CD8-positive, alpha-beta memory T cell (primary cell): ENCODE measurements at regions of chr20 and their contacts with region 1.

Region 1: DNA sequence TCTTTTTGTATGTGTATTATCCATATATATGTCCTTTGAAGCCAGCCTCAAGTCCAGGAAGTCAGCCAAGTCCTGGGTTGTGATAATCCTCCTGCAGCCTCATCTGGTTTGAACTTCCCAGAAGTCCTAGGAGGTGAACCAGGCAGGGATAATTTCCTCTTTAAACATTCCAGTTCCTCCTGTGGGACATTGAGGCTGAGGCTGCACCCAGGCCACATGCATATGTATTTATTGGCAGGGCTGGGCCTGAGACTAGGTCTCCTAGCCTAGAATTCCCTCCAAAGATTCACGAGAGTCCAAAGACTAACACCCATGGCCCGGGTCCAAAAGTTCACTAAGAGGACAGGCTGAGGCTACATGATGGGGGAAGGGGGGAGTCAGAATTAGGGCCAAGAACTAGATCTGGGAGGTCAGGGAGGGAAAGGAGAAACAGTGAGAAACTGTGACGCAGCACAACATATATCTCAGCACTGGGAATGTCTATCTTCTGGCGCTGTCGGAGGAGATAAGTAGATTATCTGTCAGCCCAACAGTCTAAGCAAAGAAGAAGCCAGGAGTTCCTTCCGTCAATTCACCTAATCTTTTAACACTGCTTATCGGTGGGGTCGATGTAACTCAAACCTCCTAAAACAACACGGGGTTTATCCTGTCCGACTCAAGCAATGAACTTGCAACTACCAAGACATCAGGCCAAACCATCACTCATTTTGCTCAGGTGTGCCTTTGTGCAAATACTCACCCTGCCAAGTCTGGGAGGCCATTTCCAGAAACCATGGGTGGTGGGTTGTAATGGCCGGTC is 43.3 kb downstream of the SNX5 start:
- DNase-seq: no peak
- H3K4me3 ChIP-seq: no peak overlapping the region
- H3K4me3 Mint-ChIP-seq: no peak overlapping the region
- H3K27ac ChIP-seq: no peak overlapping the region
- H3K27ac Mint-ChIP-seq: no peak overlapping the region
- H3K4me1 ChIP-seq: no peaks in the 10 kb centered on the region
- H3K4me1 Mint-ChIP-seq: no peaks in the 10 kb centered on the region
- H3K27me3 ChIP-seq: no peaks in the 10 kb centered on the region
- H3K27me3 Mint-ChIP-seq: peaks cover 6 to 24% of the 10 kb centered on the region in 2 donors

Region 2: GRCh38 chr20:17898548-17898994 is 26.8 kb before region 1 on chr20:
- CTCF ChIA-PET with region 1: no interaction called
- POLR2A ChIA-PET with region 1: no interaction called
- DNase-seq: peak; percentile 43 to 73 (median 45)
- H3K4me3 ChIP-seq: no peak overlapping the region
- H3K4me3 Mint-ChIP-seq: no peak overlapping the region
- H3K27ac ChIP-seq: no peak overlapping the region
- H3K27ac Mint-ChIP-seq: no peak overlapping the region
- H3K4me1 ChIP-seq: no peaks in the 10 kb centered on the region
- H3K4me1 Mint-ChIP-seq: peaks cover 0 to 8% (median 3%) of the 10 kb centered on the region in 3 donors
- H3K27me3 ChIP-seq: peaks cover 4% of the 10 kb centered on the region
- H3K27me3 Mint-ChIP-seq: peaks cover 26 to 37% of the 10 kb centered on the region in 2 donors

Region 3: DNA sequence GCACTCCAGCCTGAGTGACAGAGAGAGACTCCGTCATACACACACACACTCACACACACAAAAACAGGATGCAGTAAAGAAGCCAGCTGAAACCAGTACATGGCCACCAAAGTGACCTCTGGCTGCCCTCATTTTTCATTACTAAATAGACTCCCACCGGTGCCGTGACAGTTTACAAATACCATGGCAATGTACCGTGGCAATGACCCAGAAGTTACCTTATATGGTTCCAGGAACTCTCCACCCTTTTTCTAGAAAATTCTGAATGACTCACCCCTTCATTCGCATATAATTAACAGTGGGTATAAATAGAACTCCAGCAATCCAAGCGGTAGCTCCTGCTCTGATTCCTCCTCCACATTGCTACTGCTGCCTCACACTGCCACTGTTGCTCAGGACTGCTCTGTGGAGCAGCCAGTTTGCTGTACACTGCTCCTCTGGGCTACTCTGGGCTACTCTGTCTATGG is 14.5 kb before region 1 on chr20:
- CTCF ChIA-PET with region 1: no interaction called
- POLR2A ChIA-PET with region 1: no interaction called
- DNase-seq: no peak
- H3K4me3 ChIP-seq: no peak overlapping the region
- H3K4me3 Mint-ChIP-seq: no peak overlapping the region
- H3K27ac ChIP-seq: no peak overlapping the region
- H3K27ac Mint-ChIP-seq: peak overlapping the region in 1 of 8 donors; percentile 68
- H3K4me1 ChIP-seq: no peaks in the 10 kb centered on the region
- H3K4me1 Mint-ChIP-seq: no peaks in the 10 kb centered on the region
- H3K27me3 ChIP-seq: no peaks in the 10 kb centered on the region
- H3K27me3 Mint-ChIP-seq: peaks cover 15 to 39% of the 10 kb centered on the region in 2 donors

Region 4: GRCh38 chr20:17956099-17956685 is 30.9 kb after region 1 on chr20:
- CTCF ChIA-PET with region 1: no interaction called
- POLR2A ChIA-PET with region 1: interaction called, 13 read pairs
- DNase-seq: no peak
- H3K4me3 ChIP-seq: no peak overlapping the region
- H3K4me3 Mint-ChIP-seq: no peak overlapping the region
- H3K27ac ChIP-seq: no peak overlapping the region
- H3K27ac Mint-ChIP-seq: peak overlapping the region in 3 of 8 donors; percentile 15 to 54 (median 23)
- H3K4me1 ChIP-seq: peaks cover 35% of the 10 kb centered on the region
- H3K4me1 Mint-ChIP-seq: peaks cover 53 to 66% (median 65%) of the 10 kb centered on the region in 3 donors
- H3K27me3 ChIP-seq: no peaks in the 10 kb centered on the region
- H3K27me3 Mint-ChIP-seq: no peaks in the 10 kb centered on the region